Dendritic cell treated with granulocyte-macrophage colony-stimulating factor and Interleukin-4, amounts not matched to agents 40 ng/mL and 50 ng/mL, for 4 days (primary cell): ENCODE measurements at regions of chr2 and their contacts with region 1.

Region 1: GRCh38 chr2:48227617-48228344 is 302.2 kb upstream of the STON1 start:
- H3K4me3 Mint-ChIP-seq: no peak overlapping the region
- H3K27ac Mint-ChIP-seq: peak overlapping the region; percentile 79
- H3K4me1 Mint-ChIP-seq: peaks cover 24% of the 10 kb centered on the region
- H3K27me3 Mint-ChIP-seq: no peaks in the 10 kb centered on the region

Region 2: DNA sequence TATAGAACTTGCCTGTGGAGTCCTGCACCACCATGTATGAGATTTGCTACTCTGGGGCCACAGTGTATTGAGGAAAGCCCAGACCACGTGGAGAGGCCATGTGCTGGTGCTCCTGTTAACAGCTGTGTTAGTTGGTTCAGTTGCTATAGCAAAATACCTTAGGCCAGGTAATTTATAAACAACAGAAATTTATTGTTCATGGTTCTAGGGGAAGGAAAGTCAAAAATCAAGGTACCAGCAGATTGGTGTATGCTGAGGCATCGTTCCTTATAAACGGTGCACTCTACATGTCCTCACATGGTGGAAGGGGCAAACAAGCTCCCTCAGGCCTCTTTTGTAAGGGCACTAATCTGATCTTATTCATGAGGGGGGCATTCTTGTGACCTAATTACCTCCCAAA is 49.2 kb before region 1 on chr2:
- intact Hi-C with region 1: no loop called
- H3K4me3 Mint-ChIP-seq: no peak overlapping the region
- H3K27ac Mint-ChIP-seq: no peak overlapping the region
- H3K4me1 Mint-ChIP-seq: peaks cover 48% of the 10 kb centered on the region
- H3K27me3 Mint-ChIP-seq: no peaks in the 10 kb centered on the region

Region 3: GRCh38 chr2:48189552-48190228 is 38.1 kb before region 1 on chr2:
- intact Hi-C with region 1: loop called (anchors 5 kb)
- H3K4me3 Mint-ChIP-seq: no peak overlapping the region
- H3K27ac Mint-ChIP-seq: peak overlapping the region; percentile 78
- H3K4me1 Mint-ChIP-seq: peaks cover 41% of the 10 kb centered on the region
- H3K27me3 Mint-ChIP-seq: no peaks in the 10 kb centered on the region

Region 4: GRCh38 chr2:48205137-48205798 is 22.5 kb before region 1 on chr2:
- intact Hi-C with region 1: no loop called
- H3K4me3 Mint-ChIP-seq: peak overlapping the region; percentile 39
- H3K27ac Mint-ChIP-seq: peak overlapping the region; percentile 55
- H3K4me1 Mint-ChIP-seq: peaks cover 49% of the 10 kb centered on the region
- H3K27me3 Mint-ChIP-seq: no peaks in the 10 kb centered on the region